GM10248 (cell line): ENCODE measurements at regions of chr9 and their contacts with region 1.

Region 1: DNA sequence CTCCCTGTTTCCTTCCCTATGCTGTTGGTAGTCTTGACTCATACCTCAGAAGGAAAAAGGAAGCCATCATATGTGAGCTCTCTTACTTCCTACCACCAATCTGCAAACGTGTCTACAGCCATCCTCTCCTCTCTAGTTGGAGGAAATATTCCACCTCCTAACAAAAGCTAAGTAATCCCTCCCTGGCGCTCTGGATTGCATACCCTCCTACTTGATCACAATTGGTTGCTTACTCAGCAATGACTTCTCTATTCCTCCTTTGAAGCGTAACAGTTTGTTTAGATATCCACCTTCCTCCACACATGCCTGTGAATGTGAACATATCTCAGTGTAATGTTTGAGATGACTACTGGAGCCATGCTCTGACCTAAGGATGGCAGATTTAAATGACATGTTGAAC is 18.2 kb downstream of the RUSC2 start:
- DNase-seq: no peak
- CTCF ChIP-seq: no peak

Region 2: DNA sequence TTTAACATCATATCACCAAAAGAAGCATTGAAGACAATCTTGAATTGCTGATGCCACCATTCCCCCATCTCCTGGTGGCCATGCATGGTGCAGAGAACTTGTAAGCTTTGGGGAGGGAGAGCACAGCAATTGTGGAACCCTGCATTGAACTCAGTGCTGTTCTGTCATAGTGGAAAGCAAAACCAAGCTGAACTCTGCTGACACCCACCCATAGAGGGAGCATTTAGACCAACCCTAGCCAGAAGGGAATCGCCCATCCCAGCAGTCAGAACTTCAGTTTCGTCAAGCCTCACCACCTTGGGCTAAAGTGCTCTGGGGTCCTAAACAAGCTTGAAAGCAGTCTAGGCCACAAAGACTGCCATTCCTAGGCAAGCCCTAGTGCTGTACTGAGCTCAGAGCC is 55.6 kb before region 1 on chr9:
- CTCF ChIA-PET with region 1: no interaction called
- POLR2A ChIA-PET with region 1: no interaction called
- DNase-seq: no peak
- CTCF ChIP-seq: no peak

Region 3: GRCh38 chr9:35553670-35554543 is 45.8 kb after region 1 on chr9:
- CTCF ChIA-PET with region 1: interaction called, 18 read pairs
- POLR2A ChIA-PET with region 1: no interaction called
- DNase-seq: peak; percentile 65
- CTCF ChIP-seq: peak; percentile 64